Activated CD4-positive, alpha-beta T cell treated with anti-CD3 and anti-CD28 coated beads for 36 hours (primary cell): ENCODE measurements at regions of chr19 and their contacts with region 1.

Region 1: DNA sequence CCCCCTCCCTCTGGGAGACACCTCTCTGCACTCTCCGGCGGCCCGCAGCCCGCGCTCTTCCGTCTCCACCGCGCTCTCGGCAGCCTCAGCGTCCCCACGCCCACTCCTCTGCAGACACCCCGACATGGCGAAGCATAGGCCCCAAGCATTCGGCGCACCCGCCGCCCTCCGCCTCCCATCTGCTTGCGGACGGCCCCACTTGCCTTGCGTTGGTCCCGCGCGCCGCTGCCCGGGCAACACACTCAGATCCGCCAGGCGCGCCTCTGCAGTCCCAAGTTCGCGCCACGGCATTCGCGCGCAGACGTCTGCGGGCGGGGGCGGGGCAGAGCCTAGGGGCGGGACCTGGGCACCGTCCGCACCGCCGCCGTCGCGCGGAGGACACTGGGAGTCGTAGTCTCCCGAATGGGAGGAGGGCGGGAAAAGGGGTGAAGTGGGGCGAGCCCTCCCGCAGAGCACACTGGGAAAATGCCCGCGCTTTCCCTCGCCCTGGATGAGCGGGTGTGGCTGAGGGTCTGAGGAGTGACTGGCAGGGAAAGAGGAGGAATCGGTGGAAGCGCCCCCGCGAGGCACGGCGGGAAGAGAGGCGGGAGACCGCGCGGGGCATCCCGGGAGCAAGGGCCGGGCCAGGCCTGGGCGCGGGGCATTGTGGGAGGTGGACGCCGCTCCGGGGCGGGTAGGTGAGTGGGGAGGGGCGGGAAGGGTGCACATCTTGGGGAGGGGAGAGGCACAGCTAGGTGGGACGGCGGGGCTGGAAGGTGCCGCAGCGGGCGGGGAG is at the starts of genes LIG1 and ZSWIM9:
- DNase-seq: peak; percentile 96
- ATAC-seq: peak; percentile 90
- H3K4me3 Mint-ChIP-seq: peak within 1 kb of the TSS; percentile 79
- H3K27ac Mint-ChIP-seq: peak within 1 kb of the TSS; percentile 95
- H3K4me1 Mint-ChIP-seq: peaks cover 30% of the 10 kb centered on the region
- H3K27me3 Mint-ChIP-seq: no peaks in the 10 kb centered on the region
- total RNA-seq, gene LIG1: 193 to 194 TPM
- total RNA-seq, gene ZSWIM9: 7.4 to 10.9 TPM

Region 2: GRCh38 chr19:48110350-48110966 is 59.8 kb before region 1 on chr19 and contains the start of gene PLA2G4C:
- CTCF ChIA-PET with region 1: interaction called, 4 read pairs
- POLR2A ChIA-PET with region 1: interaction called, 8 read pairs
- intact Hi-C with region 1: loop called in 1 of 2 experiments (anchors 1 kb)
- DNase-seq: peak; percentile 93
- ATAC-seq: peak; percentile 84
- H3K4me3 Mint-ChIP-seq: peak within 1 kb of the TSS; percentile 81
- H3K27ac Mint-ChIP-seq: peak within 1 kb of the TSS; percentile 95
- H3K4me1 Mint-ChIP-seq: peaks cover 20% of the 10 kb centered on the region
- H3K27me3 Mint-ChIP-seq: no peaks in the 10 kb centered on the region
- total RNA-seq, gene PLA2G4C: 11.5 to 12.4 TPM

Region 3: GRCh38 chr19:48203732-48204628 is 33.8 kb after region 1 on chr19:
- CTCF ChIA-PET with region 1: no interaction called
- POLR2A ChIA-PET with region 1: interaction called, 12 read pairs
- intact Hi-C with region 1: loop called (anchors 1 kb)
- DNase-seq: peak; percentile 97
- ATAC-seq: peak; percentile 100
- H3K4me3 Mint-ChIP-seq: no peak overlapping the region
- H3K27ac Mint-ChIP-seq: no peak overlapping the region
- H3K4me1 Mint-ChIP-seq: peaks cover 16% of the 10 kb centered on the region
- H3K27me3 Mint-ChIP-seq: no peaks in the 10 kb centered on the region

Region 4: DNA sequence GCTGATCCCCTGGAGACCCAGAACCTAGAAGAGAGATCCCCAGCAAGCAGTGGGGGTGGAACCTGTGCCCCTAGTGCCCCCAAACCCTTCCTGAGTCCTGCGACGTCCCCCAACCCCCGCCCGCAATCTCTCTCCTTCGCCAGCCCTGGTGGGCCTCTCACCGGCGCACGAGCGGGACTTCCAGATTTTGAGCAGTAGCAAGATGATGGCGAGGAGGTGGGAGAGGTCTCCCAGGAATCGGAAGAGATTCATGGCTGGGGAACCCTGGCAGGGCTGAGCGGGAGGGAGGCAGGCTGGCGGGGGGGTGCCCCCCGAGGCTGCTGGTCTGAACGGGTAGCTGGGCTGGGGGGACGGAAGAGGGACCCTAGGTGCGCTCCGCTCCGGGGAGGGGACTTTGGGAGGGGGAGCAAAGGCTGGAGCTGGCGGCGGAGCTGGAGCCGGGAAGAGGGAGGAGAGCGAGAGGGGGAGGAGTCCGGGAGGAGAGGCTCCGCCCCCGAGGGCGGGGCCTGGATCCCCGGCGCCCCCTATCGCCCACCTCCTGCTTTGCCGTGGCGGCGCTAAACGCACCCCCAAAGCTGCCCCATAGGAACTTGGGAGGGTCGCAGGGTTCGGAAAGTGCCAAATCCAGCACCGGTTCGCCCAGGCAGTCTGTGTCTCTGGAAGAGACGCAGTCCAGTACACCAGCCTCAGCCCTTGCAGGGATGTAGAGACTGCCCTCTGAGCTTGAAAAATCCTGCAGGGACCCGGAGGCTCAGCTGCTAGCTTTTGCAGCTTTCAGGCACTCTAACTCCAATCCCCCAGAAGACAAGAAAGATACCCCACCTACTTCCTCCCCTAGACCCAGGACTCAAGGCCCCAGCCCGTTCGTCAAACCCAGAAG is 221.1 kb after region 1 on chr19 and contains the start of gene KDELR1:
- CTCF ChIA-PET with region 1: no interaction called
- POLR2A ChIA-PET with region 1: no interaction called
- intact Hi-C with region 1: loop called in 1 of 2 experiments (anchors 2 kb)
- DNase-seq: peak; percentile 85
- ATAC-seq: peak; percentile 82
- H3K4me3 Mint-ChIP-seq: peak within 1 kb of the TSS; percentile 92
- H3K27ac Mint-ChIP-seq: peak within 1 kb of the TSS; percentile 93
- H3K4me1 Mint-ChIP-seq: peaks cover 17% of the 10 kb centered on the region
- H3K27me3 Mint-ChIP-seq: peaks cover 19% of the 10 kb centered on the region
- total RNA-seq, gene KDELR1: 69.5 to 78.8 TPM

Region 5: GRCh38 chr19:48513289-48514122 is 343.3 kb after region 1 on chr19:
- CTCF ChIA-PET with region 1: no interaction called
- POLR2A ChIA-PET with region 1: no interaction called
- intact Hi-C with region 1: loop called in 1 of 2 experiments (anchors 5 kb)
- DNase-seq: peak; percentile 86
- ATAC-seq: peak; percentile 81
- H3K4me3 Mint-ChIP-seq: no peak overlapping the region
- H3K27ac Mint-ChIP-seq: peak overlapping the region; percentile 30
- H3K4me1 Mint-ChIP-seq: peaks cover 8% of the 10 kb centered on the region
- H3K27me3 Mint-ChIP-seq: no peaks in the 10 kb centered on the region